Heart right ventricle (tissue), 16 donors: ENCODE measurements at regions of chr11 and their contacts with region 1.

Region 1: DNA sequence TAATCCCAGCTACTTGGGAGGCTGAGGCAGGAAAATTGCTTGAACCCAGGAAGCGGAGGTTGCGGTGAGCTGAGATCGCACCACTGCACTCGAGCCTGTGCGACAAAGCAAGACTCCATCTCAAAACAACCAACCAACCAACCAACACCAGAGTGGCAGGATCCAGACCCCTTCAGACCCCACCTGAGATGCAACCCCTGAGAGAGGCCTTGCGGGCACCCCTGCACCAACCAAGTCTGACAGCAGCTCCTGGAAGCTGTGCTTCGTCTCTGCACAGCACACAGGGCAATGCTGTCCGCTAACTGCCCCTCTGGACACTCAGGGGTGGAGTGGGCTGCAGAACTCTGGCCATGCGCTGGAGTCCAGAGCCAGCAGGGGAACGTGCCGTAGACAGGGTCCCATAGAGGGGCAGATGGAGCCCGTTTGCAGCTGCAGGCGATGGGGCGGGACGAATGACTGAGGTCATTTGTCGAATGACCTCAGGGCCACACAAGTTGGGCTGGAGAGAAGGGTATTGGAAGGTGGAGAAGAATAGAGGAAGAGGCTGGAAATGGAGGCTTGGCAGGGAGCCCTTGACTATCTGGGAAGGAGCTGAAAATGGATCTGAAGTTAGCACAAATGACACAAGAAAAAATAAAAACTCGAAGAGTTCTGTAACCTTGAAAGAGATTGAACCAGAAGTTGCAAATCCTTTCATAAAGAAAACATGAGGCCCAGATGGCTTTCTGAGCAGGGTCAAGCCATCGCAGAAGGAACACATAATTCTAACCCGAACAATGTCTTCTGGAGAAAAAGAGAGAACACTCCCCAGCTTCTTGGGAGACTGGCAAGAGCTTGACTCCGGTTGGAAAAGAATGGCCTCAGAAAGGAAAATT is 199.7 kb downstream of the CTTN start:
- DNase-seq: no peak
- ATAC-seq: no peak
- H3K4me3 ChIP-seq: no peak overlapping the region
- H3K27ac ChIP-seq: no peak overlapping the region
- H3K4me1 ChIP-seq: no peaks in the 10 kb centered on the region
- H3K27me3 ChIP-seq: peaks cover 0 to 42% (median 4%) of the 10 kb centered on the region in 7 donors
- CTCF ChIP-seq: no peak

Region 2: DNA sequence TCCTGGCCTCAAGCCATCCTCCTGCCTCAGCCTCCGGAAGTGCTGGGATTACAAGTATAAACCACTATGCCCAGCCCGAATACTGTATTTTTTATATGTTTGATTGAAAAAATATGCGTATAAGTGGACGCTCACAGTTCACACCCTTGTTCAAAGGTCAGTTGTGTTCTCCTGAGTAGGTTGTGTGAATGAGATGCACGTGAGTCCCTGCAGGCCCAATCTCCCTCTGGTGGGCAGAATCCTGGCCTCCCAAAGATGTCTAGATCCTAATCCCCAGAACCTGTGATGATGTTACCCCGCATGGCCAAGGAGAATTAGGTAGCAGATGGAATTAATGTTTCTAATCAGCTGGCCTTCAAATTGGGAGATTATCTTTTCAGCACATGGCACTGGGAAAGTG is 157.8 kb before region 1 on chr11:
- intact Hi-C with region 1: no loop called
- DNase-seq: no peak
- ATAC-seq: no peak
- H3K4me3 ChIP-seq: no peak overlapping the region
- H3K27ac ChIP-seq: no peak overlapping the region
- H3K4me1 ChIP-seq: no peaks in the 10 kb centered on the region
- H3K27me3 ChIP-seq: peaks cover 0 to 12% (median 0%) of the 10 kb centered on the region in 7 donors
- CTCF ChIP-seq: no peak

Region 3: GRCh38 chr11:70643642-70644041 is 45.7 kb after region 1 on chr11:
- intact Hi-C with region 1: loop called in 1 of 10 experiments (anchors 2 kb)
- DNase-seq: no peak
- ATAC-seq: no peak
- H3K4me3 ChIP-seq: no peak overlapping the region
- H3K27ac ChIP-seq: no peak overlapping the region
- H3K4me1 ChIP-seq: no peaks in the 10 kb centered on the region
- H3K27me3 ChIP-seq: peaks cover 0 to 81% (median 32%) of the 10 kb centered on the region in 7 donors
- CTCF ChIP-seq: no peak

Region 4: GRCh38 chr11:70660059-70660888 is 62.3 kb after region 1 on chr11:
- intact Hi-C with region 1: no loop called
- DNase-seq: no peak
- ATAC-seq: no peak
- H3K4me3 ChIP-seq: no peak overlapping the region
- H3K27ac ChIP-seq: no peak overlapping the region
- H3K4me1 ChIP-seq: peaks cover 3 to 31% (median 24%) of the 10 kb centered on the region in 9 donors
- H3K27me3 ChIP-seq: peaks cover 13 to 85% (median 53%) of the 10 kb centered on the region in 7 donors
- CTCF ChIP-seq: no peak

Region 5: GRCh38 chr11:70699294-70700221 is 101.6 kb after region 1 on chr11:
- intact Hi-C with region 1: no loop called
- DNase-seq: no peak
- ATAC-seq: no peak
- H3K4me3 ChIP-seq: no peak overlapping the region
- H3K27ac ChIP-seq: no peak overlapping the region
- H3K4me1 ChIP-seq: no peaks in the 10 kb centered on the region
- H3K27me3 ChIP-seq: peaks cover 0 to 8% (median 5%) of the 10 kb centered on the region in 7 donors
- CTCF ChIP-seq: no peak